A549 (cell line): ENCODE measurements at regions of chr16 and their contacts with region 1.

Region 1: DNA sequence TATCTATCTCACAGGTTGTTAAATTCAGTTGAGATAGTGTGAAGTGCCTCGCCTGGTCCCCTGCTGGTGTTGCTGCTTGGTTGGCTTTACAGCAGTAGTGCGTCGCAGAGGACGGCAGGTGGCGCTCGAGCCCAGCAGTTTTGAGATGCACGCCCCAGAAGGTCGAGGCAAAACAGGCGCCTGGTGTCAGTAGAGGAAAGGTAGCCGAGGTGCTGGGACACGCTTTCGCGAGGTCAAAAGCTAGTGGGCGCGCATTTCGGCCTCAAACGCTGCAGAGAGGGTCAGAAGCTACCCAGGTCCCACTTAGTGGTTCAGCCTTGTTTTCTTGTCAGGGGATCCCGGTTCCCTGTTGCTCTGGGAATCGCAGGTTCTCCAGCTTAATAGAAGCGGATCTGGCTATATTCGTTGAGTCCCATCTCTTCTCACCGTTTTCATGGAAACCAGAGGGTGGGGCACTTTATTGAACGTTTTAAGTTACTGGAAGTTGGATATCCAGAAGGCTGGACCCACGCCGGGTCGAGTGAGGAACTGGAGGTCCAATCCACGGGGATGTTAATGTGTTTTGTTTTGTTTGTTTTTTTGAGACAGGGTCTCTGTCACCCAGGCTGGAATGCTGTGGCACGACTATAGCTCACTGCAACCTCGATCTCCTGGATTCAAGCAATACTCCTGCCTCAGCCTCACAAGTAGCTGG is 10.3 kb upstream of the ZFP90 start:
- DNase-seq: peak; percentile 87 to 90
- ATAC-seq: peak; percentile 83 to 88
- H3K4me3 ChIP-seq: peak overlapping the region; percentile 14; the same call in 1 of the 3 replicates
- H3K27ac ChIP-seq: no peak overlapping the region
- H3K4me1 ChIP-seq: peaks cover 4% of the 10 kb centered on the region; the same call in 1 of the 3 replicates
- CTCF ChIP-seq: peak; percentile 95
- EP300 ChIP-seq: no peak
- POLR2A ChIP-seq: no peak
- RAD21 ChIP-seq: peak; percentile 95 to 96

Region 2: GRCh38 chr16:68553186-68553585 is 24.4 kb after region 1 on chr16:
- CTCF ChIA-PET with region 1: interaction called, 17 read pairs
- POLR2A ChIA-PET with region 1: no interaction called
- DNase-seq: no peak
- ATAC-seq: no peak
- H3K4me3 ChIP-seq: no peak overlapping the region
- H3K27ac ChIP-seq: no peak overlapping the region
- H3K4me1 ChIP-seq: no peaks in the 10 kb centered on the region
- CTCF ChIP-seq: no peak
- EP300 ChIP-seq: no peak
- POLR2A ChIP-seq: no peak
- RAD21 ChIP-seq: no peak

Region 3: GRCh38 chr16:68668266-68668665 is 139.4 kb after region 1 on chr16:
- CTCF ChIA-PET with region 1: interaction called, 10 read pairs
- POLR2A ChIA-PET with region 1: no interaction called
- DNase-seq: no peak
- ATAC-seq: no peak
- H3K4me3 ChIP-seq: no peak overlapping the region
- H3K27ac ChIP-seq: no peak overlapping the region
- H3K4me1 ChIP-seq: no peaks in the 10 kb centered on the region
- CTCF ChIP-seq: no peak
- EP300 ChIP-seq: no peak
- POLR2A ChIP-seq: no peak
- RAD21 ChIP-seq: no peak

Region 4: GRCh38 chr16:68843482-68844210 is 314.8 kb after region 1 on chr16 and contains the start of gene TANGO6:
- CTCF ChIA-PET with region 1: interaction called, 11 read pairs
- POLR2A ChIA-PET with region 1: no interaction called
- DNase-seq: peak; percentile 74 to 85
- ATAC-seq: peak; percentile 95 to 96
- H3K4me3 ChIP-seq: peak within 1 kb of the TSS; percentile 75
- H3K27ac ChIP-seq: peak within 1 kb of the TSS; percentile 93 to 99
- H3K4me1 ChIP-seq: 0 out of 3 replicates have a peak, but pooled peaks cover 5% of the 10 kb centered on the region
- CTCF ChIP-seq: peak; percentile 47
- EP300 ChIP-seq: no peak
- POLR2A ChIP-seq: peak; percentile 94
- RAD21 ChIP-seq: peak in 1 of 2 experiments; percentile 23; a peak in 4 of 5 replicates
- polyA plus RNA-seq, gene TANGO6: 19.5 and 30.2 TPM in 2 replicates